ENCODE measurements at regions of chr7 and their contacts with region 1.

Region 1: GRCh38 chr7:51035716-51036115 is 253.0 kb upstream of the GRB10 start:
- DNase-seq: no peak
- H3K4me3 ChIP-seq: no peak overlapping the region
- H3K27ac ChIP-seq: no peak overlapping the region
- H3K27me3 ChIP-seq: peaks cover 13% of the 10 kb centered on the region
- CTCF ChIP-seq: no peak

Region 2: DNA sequence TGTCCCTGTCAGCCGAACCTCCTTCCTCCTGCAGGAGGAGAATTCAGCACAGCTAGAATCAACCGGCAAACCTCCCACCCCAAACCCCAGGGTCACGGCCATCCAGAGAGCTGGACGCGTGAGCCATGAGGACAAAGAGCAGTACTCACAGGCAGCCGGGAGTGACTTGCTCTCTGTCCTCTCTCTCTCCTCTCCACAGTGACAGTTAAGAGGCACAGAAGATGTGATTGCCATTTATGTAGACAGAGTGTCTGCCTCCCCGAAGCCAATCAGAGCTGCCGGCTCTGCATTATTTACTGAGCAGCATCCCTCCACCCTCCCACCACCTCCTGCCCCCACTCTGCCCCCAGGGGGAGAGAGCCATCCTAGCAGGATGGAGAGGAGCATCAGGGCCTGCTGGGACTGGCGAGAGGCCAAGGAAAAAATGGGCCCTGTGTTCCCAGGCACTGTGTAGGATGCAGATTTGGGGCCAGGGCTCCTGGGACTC is 474.8 kb before region 1 on chr7:
- CTCF ChIA-PET with region 1: no interaction called
- POLR2A ChIA-PET with region 1: no interaction called
- DNase-seq: no peak
- H3K4me3 ChIP-seq: no peak overlapping the region
- H3K27ac ChIP-seq: no peak overlapping the region
- H3K27me3 ChIP-seq: peaks cover 8% of the 10 kb centered on the region
- CTCF ChIP-seq: no peak

Region 3: DNA sequence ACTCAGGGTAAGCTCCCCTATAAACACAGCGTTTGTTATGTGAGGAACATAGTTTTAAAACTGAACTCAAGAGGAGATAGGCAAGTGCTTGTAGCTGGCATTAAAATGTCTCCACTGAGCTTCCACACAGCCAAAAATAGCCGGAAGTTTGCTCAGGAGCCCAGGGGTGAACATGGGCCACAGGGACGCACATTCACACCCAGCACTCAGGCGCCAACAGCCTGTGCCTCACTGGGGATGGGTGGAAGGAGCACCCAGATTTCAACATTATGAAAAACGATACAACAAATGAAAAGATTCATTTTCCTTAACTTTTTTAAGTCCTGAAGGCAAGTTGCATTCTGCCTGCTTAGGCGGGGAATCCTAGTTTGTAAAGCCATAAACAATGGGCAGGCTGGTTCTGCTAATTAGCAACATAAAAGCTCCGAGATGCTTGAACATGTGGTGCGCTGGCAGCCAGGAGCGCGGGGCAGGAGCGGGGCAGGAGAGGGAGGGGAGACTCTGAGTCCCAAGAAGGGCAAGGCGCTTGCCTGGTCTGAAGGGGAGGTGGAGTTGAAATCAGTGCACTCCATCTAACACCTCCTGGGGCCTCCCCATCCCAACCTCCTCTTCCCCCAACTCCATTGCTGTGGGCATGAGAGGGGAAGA is 45.0 kb after region 1 on chr7:
- CTCF ChIA-PET with region 1: no interaction called
- POLR2A ChIA-PET with region 1: interaction called, 11 read pairs
- DNase-seq: no peak
- H3K4me3 ChIP-seq: no peak overlapping the region
- H3K27ac ChIP-seq: no peak overlapping the region
- H3K27me3 ChIP-seq: peaks cover 15% of the 10 kb centered on the region
- CTCF ChIP-seq: no peak